OCI-LY7 (cell line): ENCODE measurements at regions of chr13 and their contacts with region 1.

Region 1: GRCh38 chr13:40047322-40047771 is 391.9 kb downstream of the COG6 start:
- DNase-seq: no peak
- H3K4me3 ChIP-seq: no peak overlapping the region
- H3K27ac ChIP-seq: no peak overlapping the region
- H3K4me1 ChIP-seq: peaks cover 11% of the 10 kb centered on the region
- CTCF ChIP-seq: no peak

Region 2: GRCh38 chr13:39760521-39760920 is 286.8 kb before region 1 on chr13:
- CTCF ChIA-PET with region 1: interaction called, 10 read pairs
- POLR2A ChIA-PET with region 1: no interaction called
- intact Hi-C with region 1: no loop called
- DNase-seq: no peak
- H3K4me3 ChIP-seq: no peak overlapping the region
- H3K27ac ChIP-seq: no peak overlapping the region
- H3K4me1 ChIP-seq: no peaks in the 10 kb centered on the region
- CTCF ChIP-seq: no peak

Region 3: DNA sequence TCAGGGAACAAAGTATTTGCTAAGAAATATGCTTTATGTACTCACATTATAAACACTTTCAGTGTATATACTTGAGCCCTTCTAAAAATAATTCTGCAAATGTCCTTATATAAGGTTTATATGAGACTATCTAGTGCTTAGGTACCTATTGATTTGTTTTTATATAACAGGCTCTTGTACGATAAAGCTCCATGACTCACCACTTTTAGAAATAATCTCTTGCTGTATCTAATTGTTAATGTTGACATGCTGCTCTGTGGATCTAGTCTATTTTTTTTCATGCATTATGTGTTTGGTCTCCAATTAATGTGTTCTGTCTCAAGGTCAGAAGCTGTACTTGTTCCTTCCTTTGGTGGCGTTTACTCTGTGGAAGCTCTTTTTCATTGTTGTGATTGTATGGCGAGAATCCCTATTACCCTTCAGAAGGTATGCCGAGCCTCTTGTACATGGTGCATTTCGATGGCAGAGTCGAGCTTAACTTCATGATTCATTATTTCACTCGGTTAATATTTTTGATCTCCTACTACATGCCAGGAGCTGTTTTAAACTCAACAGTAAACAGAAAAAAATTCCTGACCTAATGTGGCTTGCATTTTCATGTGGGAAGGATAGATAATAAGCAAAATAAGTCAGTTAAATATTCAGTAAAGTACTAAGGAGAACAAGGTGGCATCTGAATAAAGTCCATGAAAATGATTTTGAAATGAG is 30.2 kb before region 1 on chr13:
- CTCF ChIA-PET with region 1: no interaction called
- POLR2A ChIA-PET with region 1: no interaction called
- intact Hi-C with region 1: no loop called
- DNase-seq: no peak
- H3K4me3 ChIP-seq: no peak overlapping the region
- H3K27ac ChIP-seq: no peak overlapping the region
- H3K4me1 ChIP-seq: peaks cover 6% of the 10 kb centered on the region
- CTCF ChIP-seq: no peak